Psoas muscle (tissue), 8 donors: ENCODE measurements at regions of chr11 and their contacts with region 1.

Region 1: GRCh38 chr11:1389103-1389931 is 417 bp upstream of the BRSK2 start:
- DNase-seq: peak; percentile 96 to 99
- ATAC-seq: peak; percentile 99 to 100 (median 100)
- H3K4me3 ChIP-seq: peak overlapping the region; percentile 66
- H3K27ac ChIP-seq: no peak overlapping the region
- H3K4me1 ChIP-seq: no peaks in the 10 kb centered on the region
- H3K27me3 ChIP-seq: peaks cover 0 to 56% (median 17%) of the 10 kb centered on the region in 3 donors
- CTCF ChIP-seq: no peak

Region 2: DNA sequence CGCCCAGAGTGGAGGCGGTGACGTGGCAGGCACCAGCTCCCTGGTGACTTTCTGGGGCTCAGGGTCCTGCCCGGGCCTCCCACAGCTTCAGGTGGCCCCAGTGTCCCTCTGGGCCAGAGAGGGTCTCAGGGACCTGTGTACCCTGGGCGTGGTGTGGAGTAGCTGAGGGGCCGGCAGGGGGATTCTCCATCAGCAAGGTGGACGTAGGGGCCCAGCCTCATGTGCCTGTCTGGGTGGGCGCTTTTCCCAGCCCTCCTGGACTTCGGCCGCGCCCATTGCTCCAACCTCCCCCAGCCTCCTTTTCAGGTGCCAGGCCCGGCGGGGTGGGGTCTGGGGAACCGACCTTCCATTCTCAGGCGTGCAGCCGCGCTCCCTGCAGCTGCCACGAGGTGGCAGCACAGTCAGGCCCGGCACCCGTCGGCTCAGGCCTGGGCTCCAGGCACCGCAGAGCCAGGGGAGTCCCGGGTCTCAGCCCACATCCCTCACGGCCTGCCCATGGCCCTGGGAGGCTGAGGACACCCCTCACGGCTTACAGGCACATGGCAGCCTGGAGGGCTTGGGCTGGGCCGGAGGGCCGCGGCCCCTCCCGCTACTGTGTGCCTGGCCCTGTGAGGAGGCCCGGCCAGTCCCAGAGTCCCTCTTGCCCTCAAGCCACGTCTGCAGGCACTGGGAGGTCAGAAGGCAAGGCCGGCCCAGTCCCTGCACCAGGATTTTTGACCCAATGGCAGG is 186.4 kb before region 1 on chr11:
- intact Hi-C with region 1: loop called in 1 of 2 experiments (anchors 10 kb)
- DNase-seq: peak; percentile 68 to 76
- ATAC-seq: peak; percentile 73 to 89 (median 84)
- H3K4me3 ChIP-seq: no peak overlapping the region
- H3K27ac ChIP-seq: no peak overlapping the region
- H3K4me1 ChIP-seq: no peaks in the 10 kb centered on the region
- H3K27me3 ChIP-seq: peaks cover 0 to 47% (median 8%) of the 10 kb centered on the region in 3 donors
- CTCF ChIP-seq: peak; percentile 85

Region 3: DNA sequence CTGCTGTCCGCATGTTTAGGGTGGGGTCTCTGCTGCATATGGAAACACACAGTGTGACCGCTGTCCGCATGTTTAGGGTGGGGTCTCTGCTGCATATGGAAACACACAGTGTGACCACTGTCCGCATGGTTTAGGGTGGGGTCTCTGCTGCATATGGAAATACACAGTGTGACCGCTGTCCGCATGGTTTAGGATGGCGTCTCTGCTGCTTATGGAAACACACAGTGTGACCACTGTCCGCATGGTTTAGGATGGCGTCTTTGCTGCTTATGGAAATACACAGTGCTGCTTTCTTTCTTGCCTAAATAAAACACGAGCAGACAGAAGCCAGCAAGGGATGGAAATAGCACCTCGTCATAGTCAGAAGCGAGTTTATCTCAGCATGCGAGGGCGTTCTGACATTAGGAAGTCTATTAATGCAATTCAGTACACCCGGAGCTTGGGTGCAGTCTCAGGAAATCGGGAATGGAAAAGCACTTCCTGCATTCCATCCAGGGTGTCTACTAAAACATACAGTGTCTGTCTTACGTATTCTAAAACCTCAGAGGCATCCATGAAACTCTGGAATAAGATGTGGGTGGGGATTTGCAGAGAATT is 47.3 kb before region 1 on chr11:
- intact Hi-C with region 1: loop called in 1 of 2 experiments (anchors 2 kb)
- DNase-seq: no peak
- ATAC-seq: peak in 1 of 4 donors; percentile 32
- H3K4me3 ChIP-seq: no peak overlapping the region
- H3K27ac ChIP-seq: no peak overlapping the region
- H3K4me1 ChIP-seq: no peaks in the 10 kb centered on the region
- H3K27me3 ChIP-seq: no peaks in the 10 kb centered on the region
- CTCF ChIP-seq: no peak